ENCODE measurements at regions of chr1 and their contacts with region 1.

Region 1: DNA sequence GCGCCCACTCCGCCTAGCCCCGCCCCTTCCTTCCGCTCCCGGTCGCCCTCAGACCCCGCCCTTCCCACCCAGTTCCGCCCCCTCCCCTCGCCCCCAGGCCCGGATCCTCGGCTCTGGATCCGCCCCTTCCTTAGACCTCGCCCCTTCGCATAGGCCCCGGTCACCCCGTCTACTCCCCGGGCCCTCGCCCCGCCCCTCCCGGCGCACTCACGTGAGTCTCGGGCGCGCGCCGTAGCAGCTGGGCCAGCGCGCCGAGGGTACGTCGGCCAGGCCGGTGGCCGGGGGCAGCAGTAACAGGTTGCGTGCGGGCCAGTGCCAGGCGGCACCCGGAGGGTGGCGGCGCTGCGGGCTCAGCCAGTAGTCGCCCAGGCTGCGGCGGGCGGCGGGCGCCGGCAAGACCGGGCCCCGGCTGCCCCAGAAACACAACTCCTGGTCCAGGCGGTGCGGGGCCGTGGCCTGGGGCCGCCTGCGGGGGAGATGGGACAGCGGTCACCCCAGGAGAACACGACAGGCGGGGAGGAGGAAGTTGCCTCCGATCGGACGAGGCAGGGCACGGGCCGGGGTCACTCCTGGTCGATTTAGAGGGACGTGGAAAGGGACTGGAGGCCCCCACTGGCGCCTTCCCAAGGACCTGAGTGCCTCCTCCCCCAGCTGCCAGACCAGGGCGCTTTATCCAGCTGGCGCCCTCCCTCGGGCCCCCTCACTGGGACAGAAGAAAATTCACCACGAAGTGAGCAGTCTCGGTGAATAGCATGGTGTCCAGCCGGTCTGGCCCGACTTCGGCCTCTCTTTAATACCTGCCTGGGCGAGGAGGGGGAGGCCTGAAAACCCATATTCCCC is 10.7 kb downstream of the FAM229A start:
- DNase-seq: peak; percentile 82 to 97
- H3K4me3 ChIP-seq: peak overlapping the region; percentile 48 to 84 (median 64)
- H3K27ac ChIP-seq: peak overlapping the region; percentile 53; the same call in 1 of the 2 replicates
- H3K4me1 ChIP-seq: peaks cover 0 to 9% (median 3%) of the 10 kb centered on the region in 4 experiments; a peak in 5 of 7 replicates
- H3K27me3 ChIP-seq: peaks cover 2 to 20% (median 12%) of the 10 kb centered on the region in 4 experiments
- CTCF ChIP-seq: no peak
- EP300 ChIP-seq: no peak
- POLR2A ChIP-seq: peak in 1 of 2 experiments; percentile 84; a peak in 2 of 3 replicates
- RAD21 ChIP-seq: peak in 1 of 2 experiments; percentile 13; a peak in 1 of 4 replicates

Region 2: GRCh38 chr1:32263744-32264143 is 87.9 kb before region 1 on chr1:
- CTCF ChIA-PET with region 1: no interaction called
- POLR2A ChIA-PET with region 1: no interaction called
- DNase-seq: no peak
- H3K4me3 ChIP-seq: no peak overlapping the region
- H3K27ac ChIP-seq: no peak overlapping the region
- H3K4me1 ChIP-seq: peaks cover 0 to 3% (median 2%) of the 10 kb centered on the region in 4 experiments; a peak in 3 of 7 replicates
- H3K27me3 ChIP-seq: no peaks in the 10 kb centered on the region
- CTCF ChIP-seq: no peak
- EP300 ChIP-seq: no peak
- POLR2A ChIP-seq: no peak
- RAD21 ChIP-seq: no peak

Region 3: DNA sequence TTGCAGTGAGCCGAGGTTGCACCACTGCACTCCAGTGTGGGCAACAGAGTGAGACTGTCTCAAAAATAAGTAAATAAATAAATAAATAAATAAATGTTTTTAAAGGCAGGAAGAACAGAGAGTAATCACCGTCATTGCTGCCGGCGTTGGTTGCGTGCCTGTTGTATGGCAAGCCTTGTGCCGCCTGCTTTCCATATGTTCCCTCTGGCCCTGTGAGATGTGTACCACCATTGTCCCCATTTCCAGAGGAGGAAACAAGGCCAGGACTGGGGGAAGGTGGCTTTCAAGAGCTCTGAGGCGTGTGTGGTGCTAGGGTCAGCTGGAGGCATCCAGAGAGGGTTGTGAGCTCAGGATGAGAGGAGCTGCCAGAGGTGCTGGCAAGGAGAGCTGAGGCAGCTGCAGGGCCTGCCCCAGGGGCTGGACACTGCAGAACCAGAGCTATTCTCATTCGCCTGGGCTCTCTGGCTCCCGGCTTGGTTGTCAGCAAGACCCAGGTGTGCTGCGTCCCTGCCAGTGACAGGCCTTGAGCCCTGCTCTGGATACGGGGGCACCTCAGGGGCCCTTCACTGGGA is 10.3 kb before region 1 on chr1:
- CTCF ChIA-PET with region 1: interaction called, 6 read pairs
- POLR2A ChIA-PET with region 1: interaction called, 321 read pairs
- DNase-seq: no peak
- H3K4me3 ChIP-seq: no peak overlapping the region
- H3K27ac ChIP-seq: no peak overlapping the region
- H3K4me1 ChIP-seq: peaks cover 0 to 19% (median 14%) of the 10 kb centered on the region in 4 experiments; a peak in 6 of 7 replicates
- H3K27me3 ChIP-seq: peaks cover 0 to 7% (median 2%) of the 10 kb centered on the region in 4 experiments; a peak in 4 of 7 replicates
- CTCF ChIP-seq: no peak
- EP300 ChIP-seq: no peak
- POLR2A ChIP-seq: no peak
- RAD21 ChIP-seq: no peak

Region 4: GRCh38 chr1:32361674-32362473 is 10.3 kb after region 1 on chr1:
- CTCF ChIA-PET with region 1: no interaction called
- POLR2A ChIA-PET with region 1: interaction called, 38 read pairs
- DNase-seq: peak in 1 of 2 experiments; percentile 82
- H3K4me3 ChIP-seq: peak overlapping the region; percentile 11 to 53 (median 26)
- H3K27ac ChIP-seq: no peak overlapping the region
- H3K4me1 ChIP-seq: peaks cover 0 to 3% (median 1%) of the 10 kb centered on the region in 4 experiments; a peak in 4 of 7 replicates
- H3K27me3 ChIP-seq: peaks cover 3 to 24% (median 14%) of the 10 kb centered on the region in 4 experiments
- CTCF ChIP-seq: peak in 2 of 3 experiments; percentile 21 to 23; a peak in 2 of 4 replicates
- EP300 ChIP-seq: no peak
- POLR2A ChIP-seq: peak; percentile 17 to 51; a peak in 2 of 3 replicates
- RAD21 ChIP-seq: no peak; a peak in 1 of 4 replicates

Region 5: DNA sequence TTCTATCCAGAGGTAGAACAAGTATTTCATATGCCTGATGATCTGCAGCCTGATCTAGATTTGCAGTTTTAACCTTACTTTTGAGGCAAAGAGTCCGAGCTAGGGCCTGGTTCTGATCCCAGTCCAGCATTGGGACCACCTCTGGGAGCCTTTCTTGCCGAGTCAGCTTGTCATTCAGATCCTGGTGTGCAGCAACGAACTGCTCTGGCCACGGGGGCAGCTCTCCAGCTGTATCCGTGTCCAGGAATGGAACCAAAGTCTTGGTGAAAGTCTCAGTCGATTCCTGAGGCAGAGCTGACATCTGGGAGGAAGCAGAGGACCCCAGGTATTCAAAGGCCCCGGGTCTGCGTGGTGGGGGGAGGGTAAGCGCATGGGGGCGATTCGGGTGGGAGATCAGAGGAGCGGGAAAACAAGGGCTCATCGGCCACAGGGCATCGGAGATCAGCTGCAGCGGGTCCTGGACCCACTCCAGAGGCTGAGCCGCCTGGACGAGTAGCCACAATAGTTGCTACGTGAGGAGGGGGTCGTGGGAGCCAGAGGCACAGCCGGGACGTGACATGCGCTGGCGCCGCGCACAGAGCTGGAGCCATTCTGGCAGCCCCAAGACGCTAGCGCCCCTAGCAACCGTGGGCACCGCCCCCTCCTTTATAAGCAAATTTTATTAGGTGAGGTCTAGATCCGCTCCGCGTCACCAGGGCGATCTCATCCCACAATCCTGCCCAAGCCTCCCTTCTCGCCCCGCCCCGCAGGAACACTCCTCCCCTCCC is 75.1 kb after region 1 on chr1:
- CTCF ChIA-PET with region 1: no interaction called
- POLR2A ChIA-PET with region 1: no interaction called
- DNase-seq: no peak
- H3K4me3 ChIP-seq: no peak overlapping the region
- H3K27ac ChIP-seq: no peak overlapping the region
- H3K4me1 ChIP-seq: peaks cover 0 to 10% (median 7%) of the 10 kb centered on the region in 4 experiments; a peak in 5 of 7 replicates
- H3K27me3 ChIP-seq: no peaks in the 10 kb centered on the region
- CTCF ChIP-seq: no peak
- EP300 ChIP-seq: no peak
- POLR2A ChIP-seq: no peak
- RAD21 ChIP-seq: no peak